ENCODE measurements at regions of chr3 and their contacts with region 1.

Region 1: GRCh38 chr3:101091489-101091888 is 98.3 kb upstream of the ABI3BP start:
- DNase-seq: no peak
- ATAC-seq: no peak
- H3K4me3 ChIP-seq: no peak overlapping the region
- H3K27ac ChIP-seq: no peak overlapping the region
- H3K4me1 ChIP-seq: no peaks in the 10 kb centered on the region
- H3K27me3 ChIP-seq: no peaks in the 10 kb centered on the region
- CTCF ChIP-seq: no peak

Region 2: GRCh38 chr3:100915706-100916495 is 175.6 kb before region 1 on chr3:
- CTCF ChIA-PET with region 1: no interaction called
- POLR2A ChIA-PET with region 1: no interaction called
- in situ Hi-C with region 1: no loop called
- intact Hi-C with region 1: no loop called
- DNase-seq: no peak
- ATAC-seq: no peak
- H3K4me3 ChIP-seq: no peak overlapping the region
- H3K27ac ChIP-seq: no peak overlapping the region
- H3K4me1 ChIP-seq: no peaks in the 10 kb centered on the region
- H3K27me3 ChIP-seq: no peaks in the 10 kb centered on the region
- CTCF ChIP-seq: no peak

Region 3: DNA sequence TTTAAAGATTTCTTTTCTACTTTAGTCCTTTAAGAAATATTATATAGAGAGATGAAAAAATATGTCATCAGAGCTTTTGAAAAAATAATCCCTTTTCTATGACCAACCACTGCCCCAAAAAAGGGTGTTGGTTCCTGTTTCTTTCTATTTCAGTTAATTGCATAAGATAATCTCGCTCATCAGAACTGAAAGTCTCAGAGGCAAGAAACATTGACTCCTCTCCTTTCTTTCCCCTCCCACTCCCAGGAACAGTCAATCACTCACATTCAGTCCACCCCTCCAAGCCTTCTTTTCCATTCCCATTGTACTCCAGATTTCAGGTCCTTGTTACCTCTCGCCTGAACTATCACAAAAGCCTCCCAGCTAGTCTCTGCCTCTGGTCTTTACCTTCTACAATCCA is 55.5 kb after region 1 on chr3:
- CTCF ChIA-PET with region 1: no interaction called
- POLR2A ChIA-PET with region 1: no interaction called
- in situ Hi-C with region 1: no loop called
- intact Hi-C with region 1: no loop called
- DNase-seq: no peak
- ATAC-seq: no peak
- H3K4me3 ChIP-seq: no peak overlapping the region
- H3K27ac ChIP-seq: no peak overlapping the region
- H3K4me1 ChIP-seq: no peaks in the 10 kb centered on the region
- H3K27me3 ChIP-seq: no peaks in the 10 kb centered on the region
- CTCF ChIP-seq: no peak

Region 4: GRCh38 chr3:101195951-101196713 is 104.6 kb after region 1 on chr3:
- CTCF ChIA-PET with region 1: no interaction called
- POLR2A ChIA-PET with region 1: no interaction called
- in situ Hi-C with region 1: no loop called
- intact Hi-C with region 1: loop called (anchors 10 kb)
- DNase-seq: peak; percentile 12
- ATAC-seq: peak; percentile 65; the same call in 1 of the 2 replicates
- H3K4me3 ChIP-seq: no peak overlapping the region
- H3K27ac ChIP-seq: no peak overlapping the region
- H3K4me1 ChIP-seq: no peaks in the 10 kb centered on the region
- H3K27me3 ChIP-seq: peaks cover 3% of the 10 kb centered on the region; the same call in 1 of the 2 replicates
- CTCF ChIP-seq: peak; percentile 59; the same call in 1 of the 2 replicates